Heart left ventricle (tissue), 16 donors: ENCODE measurements at regions of chr11 and their contacts with region 1.

Region 1: DNA sequence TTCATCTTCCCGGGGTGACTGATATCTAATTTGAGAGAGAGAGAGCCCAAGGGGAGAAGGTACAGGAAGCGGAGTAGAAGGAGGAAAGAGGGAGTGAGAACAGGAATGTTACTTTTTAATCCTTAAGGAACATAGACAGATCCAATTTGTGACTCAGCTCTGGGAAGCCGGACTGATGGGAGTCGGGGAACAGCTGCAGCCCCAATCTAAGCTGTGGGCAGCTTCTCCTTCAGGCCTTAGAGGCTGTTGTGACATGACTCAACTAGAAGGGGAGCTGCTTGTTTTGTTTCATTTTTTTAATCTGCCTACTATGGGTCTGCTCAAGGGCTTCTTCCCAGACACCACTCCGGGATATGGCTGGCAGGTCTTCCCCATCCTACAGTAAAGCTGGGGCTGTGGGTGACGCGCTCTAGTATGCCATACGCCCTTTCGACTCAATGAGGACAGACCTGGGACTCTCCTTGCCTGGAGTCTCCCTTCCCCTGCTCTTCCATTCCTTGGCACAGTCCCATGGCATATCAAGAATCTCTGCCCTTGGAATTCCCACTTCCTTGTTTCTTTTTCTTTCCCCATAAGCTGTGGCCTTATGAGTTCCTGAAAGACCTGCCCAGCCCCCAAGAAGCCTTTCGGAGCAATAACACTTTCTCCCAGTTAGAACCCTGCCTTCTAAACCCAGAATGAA is 103.3 kb upstream of the AKIP1 start:
- DNase-seq: peak in 4 of 5 donors; percentile 44 to 76 (median 54)
- ATAC-seq: peak in 3 of 4 donors; percentile 44 to 68 (median 51)
- H3K4me3 ChIP-seq: peak overlapping the region in 10 of 12 donors; percentile 17 to 81 (median 64)
- H3K27ac ChIP-seq: peak overlapping the region; percentile 62 to 93 (median 88)
- H3K4me1 ChIP-seq: peaks cover 2 to 84% (median 62%) of the 10 kb centered on the region in 12 donors
- H3K27me3 ChIP-seq: no peaks in the 10 kb centered on the region
- CTCF ChIP-seq: no peak
- POLR2A ChIP-seq: no peak

Region 2: DNA sequence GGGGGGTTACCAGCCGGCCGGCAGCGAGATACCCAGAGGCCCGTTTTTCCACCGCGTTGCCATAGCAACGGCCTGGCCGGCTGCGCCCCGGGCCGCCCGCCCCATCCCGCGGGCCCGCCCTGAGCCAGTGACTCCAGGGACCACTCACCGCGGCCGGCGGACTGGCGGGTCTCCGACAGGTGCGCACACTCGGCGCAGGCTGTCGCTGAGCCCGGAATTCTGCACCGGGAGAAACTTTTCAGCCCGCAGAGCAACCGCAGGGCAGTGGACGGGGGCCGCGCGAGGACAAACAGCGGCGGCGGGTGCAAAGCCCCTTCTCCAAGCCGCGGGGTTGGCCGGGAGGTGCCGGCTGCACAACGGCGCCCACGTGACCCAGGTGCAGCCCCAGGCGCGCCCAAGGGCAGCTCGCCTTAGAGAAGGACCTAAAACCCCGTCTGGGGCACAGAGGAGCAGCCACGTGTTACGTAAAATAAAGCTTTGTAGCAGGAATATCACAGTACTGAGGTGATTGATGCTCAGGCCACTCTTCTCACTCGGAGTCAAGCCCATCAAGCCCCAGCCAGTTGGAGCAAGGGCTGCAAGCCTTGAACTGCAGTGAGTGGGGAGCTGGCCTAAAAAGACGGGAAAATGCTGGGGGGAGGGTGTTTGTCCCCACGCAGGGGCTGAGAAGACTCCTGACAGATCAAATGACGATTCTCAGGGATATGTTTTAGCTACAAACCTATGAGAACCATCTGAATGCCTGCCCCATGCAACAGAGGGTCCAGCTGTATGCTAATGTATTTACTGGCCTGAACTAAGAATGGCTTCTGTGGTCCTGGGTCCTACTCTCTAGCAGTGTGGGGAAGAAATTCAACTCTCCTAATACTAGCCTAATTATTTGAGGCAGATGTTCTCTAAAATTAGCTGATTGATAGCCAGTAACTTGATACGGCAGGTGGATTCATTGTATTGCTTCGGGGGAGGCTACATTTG is 213.5 kb before region 1 on chr11 and contains the start of gene STK33:
- intact Hi-C with region 1: loop called in 1 of 10 experiments (anchors 10 kb)
- DNase-seq: peak; percentile 68 to 81 (median 74)
- ATAC-seq: peak; percentile 82 to 97 (median 96)
- H3K4me3 ChIP-seq: peak within 1 kb of the TSS; percentile 36 to 79 (median 65)
- H3K27ac ChIP-seq: peak within 1 kb of the TSS; percentile 9 to 75 (median 60)
- H3K4me1 ChIP-seq: peaks cover 0 to 15% (median 0%) of the 10 kb centered on the region in 12 donors
- H3K27me3 ChIP-seq: peaks cover 4 to 37% (median 8%) of the 10 kb centered on the region in 9 donors
- CTCF ChIP-seq: no peak
- POLR2A ChIP-seq: no peak
- total RNA-seq, gene STK33: 18.0 to 41.5 (median 31.0) TPM

Region 3: DNA sequence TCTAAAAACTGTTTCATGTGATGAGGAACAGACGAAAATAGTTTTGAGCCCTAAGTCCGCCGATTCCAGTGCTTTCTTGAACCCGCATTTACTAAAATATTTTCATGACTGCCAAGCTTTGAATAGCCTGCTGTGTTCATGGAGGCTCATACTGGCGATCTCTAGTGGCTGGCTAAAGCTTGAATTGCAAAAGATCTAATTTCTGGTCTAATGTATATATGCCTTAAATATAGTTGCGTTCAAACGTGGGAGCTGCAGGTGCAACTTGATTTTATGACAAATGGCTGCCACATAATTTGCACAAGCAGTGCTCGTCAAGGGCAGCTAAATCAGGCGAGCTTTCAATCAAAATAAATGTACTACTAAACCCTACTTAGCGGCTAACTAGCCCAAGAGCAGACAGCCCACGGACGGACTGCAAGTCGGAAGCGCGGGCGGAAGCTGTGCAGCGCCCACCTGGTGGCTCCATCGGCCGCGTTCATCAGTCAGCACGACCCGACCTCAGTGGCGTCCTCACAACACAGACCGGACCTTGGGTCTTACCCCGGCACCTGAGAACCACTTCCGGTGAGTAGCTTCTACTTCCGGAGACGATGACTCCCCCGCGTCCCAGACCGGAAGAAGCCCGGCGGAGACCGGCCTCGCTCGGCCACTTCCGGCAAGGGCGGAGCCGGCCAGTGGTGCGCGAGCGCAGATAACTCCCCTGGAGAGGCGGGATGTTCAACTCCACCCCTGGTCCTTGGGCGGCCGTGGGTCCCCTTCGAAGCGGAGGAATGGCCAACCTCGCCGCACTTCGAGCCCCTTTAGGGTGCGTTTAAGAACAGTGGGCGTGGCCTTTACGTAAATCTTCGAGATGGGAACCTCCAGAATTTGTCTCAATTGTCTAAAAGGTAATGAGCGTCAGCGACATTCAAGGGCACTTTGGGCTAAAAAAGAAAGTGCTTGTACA is 119.0 kb before region 1 on chr11:
- intact Hi-C with region 1: loop called (anchors 2 to 5 kb)
- DNase-seq: peak; percentile 94 to 97 (median 96)
- ATAC-seq: peak; percentile 97 to 99 (median 98)
- H3K4me3 ChIP-seq: peak overlapping the region; percentile 38 to 75 (median 66)
- H3K27ac ChIP-seq: peak overlapping the region; percentile 45 to 96 (median 88)
- H3K4me1 ChIP-seq: peaks cover 0 to 44% (median 22%) of the 10 kb centered on the region in 12 donors
- H3K27me3 ChIP-seq: no peaks in the 10 kb centered on the region
- CTCF ChIP-seq: peak in 5 of 12 donors; percentile 17 to 53 (median 49)
- POLR2A ChIP-seq: peak in 1 of 2 donors; percentile 71

Region 4: DNA sequence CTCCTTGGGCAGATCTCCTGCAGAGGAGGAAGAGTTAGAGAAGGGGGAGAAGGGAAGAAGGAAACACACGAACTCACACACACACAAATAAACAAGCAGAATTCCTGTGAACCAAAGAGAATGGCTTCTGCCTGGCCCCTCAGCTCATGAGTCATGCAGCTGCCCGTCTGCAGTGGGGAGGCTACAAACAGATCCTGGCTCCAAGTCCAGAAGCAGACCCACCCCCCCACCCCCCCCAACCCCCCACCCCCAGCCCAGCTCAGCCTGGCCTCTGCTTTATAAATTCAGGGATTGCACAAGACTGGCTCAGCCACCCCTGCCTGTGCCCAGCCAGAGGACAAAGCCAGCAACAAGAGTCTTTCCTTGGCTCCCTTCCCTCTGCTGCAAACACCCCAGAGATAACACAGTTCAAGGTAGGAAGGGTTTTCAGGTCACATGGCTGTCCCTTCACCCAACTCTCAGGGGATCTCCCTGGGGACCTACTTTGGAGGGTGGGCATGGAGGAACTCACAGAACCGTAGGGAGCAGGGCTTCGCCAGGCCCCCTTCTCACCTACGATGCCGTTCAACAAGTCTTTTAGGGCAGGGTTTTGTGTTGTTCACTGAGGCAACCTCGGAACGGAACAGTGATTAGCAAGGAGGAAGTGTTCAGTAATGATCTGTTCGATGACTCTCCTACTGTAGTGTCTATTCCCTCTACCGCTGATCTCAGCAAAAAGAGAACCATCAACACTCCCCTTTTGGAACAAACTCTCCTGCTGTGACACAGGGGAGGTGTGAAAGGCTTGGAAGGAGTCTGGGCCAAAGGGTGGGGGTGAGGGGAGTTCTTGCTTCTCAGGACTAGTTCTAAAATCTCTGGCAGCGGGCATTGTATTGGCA is 89.6 kb before region 1 on chr11:
- intact Hi-C with region 1: loop called in 3 of 10 experiments (anchors 5 to 10 kb)
- DNase-seq: peak in 4 of 5 donors; percentile 36 to 82 (median 59)
- ATAC-seq: peak; percentile 77 to 82 (median 80)
- H3K4me3 ChIP-seq: no peak overlapping the region
- H3K27ac ChIP-seq: peak overlapping the region; percentile 50 to 95 (median 80)
- H3K4me1 ChIP-seq: peaks cover 24 to 97% (median 82%) of the 10 kb centered on the region in 12 donors
- H3K27me3 ChIP-seq: no peaks in the 10 kb centered on the region
- CTCF ChIP-seq: no peak
- POLR2A ChIP-seq: no peak

Region 5: DNA sequence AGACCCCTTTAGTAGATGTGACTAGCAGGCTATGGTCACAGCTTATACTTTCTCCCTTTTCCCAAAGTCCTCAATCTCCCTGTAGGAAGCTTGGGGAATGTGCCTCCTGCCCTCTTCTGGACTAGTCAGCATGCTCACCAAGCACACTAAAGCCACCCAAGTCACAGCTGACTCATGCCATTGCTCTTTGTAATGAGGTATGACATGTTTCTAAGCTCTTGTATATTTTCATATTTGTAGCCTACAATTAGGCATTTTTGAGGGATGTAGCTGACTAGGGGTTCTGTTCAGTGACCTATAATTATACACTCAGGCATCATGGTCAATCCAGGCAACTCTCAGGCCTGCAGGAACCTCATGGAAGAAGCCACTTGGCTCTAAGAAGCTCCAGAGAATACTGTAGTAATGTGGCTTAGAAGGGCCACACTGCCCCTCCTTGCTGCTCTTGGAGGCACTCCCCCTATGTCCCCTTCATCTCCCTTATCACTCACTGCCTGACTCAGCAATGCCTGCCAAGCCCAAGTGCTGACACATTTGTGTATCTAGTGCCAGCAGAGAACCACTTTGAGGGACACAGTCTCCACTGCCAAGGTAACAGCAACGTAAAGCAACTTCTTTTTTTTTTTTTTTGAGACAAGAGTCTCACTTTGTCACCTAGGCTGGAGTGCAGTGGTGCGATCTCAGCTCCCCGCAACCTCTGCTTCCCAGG is 38.9 kb before region 1 on chr11:
- intact Hi-C with region 1: loop called in 2 of 10 experiments (anchors 5 kb)
- DNase-seq: peak in 4 of 5 donors; percentile 71 to 88 (median 80)
- ATAC-seq: peak; percentile 90 to 94 (median 93)
- H3K4me3 ChIP-seq: no peak overlapping the region
- H3K27ac ChIP-seq: peak overlapping the region; percentile 31 to 86 (median 72)
- H3K4me1 ChIP-seq: peaks cover 8 to 90% (median 44%) of the 10 kb centered on the region in 12 donors
- H3K27me3 ChIP-seq: no peaks in the 10 kb centered on the region
- CTCF ChIP-seq: peak in 6 of 12 donors; percentile 8 to 43 (median 25)
- POLR2A ChIP-seq: no peak

Region 6: DNA sequence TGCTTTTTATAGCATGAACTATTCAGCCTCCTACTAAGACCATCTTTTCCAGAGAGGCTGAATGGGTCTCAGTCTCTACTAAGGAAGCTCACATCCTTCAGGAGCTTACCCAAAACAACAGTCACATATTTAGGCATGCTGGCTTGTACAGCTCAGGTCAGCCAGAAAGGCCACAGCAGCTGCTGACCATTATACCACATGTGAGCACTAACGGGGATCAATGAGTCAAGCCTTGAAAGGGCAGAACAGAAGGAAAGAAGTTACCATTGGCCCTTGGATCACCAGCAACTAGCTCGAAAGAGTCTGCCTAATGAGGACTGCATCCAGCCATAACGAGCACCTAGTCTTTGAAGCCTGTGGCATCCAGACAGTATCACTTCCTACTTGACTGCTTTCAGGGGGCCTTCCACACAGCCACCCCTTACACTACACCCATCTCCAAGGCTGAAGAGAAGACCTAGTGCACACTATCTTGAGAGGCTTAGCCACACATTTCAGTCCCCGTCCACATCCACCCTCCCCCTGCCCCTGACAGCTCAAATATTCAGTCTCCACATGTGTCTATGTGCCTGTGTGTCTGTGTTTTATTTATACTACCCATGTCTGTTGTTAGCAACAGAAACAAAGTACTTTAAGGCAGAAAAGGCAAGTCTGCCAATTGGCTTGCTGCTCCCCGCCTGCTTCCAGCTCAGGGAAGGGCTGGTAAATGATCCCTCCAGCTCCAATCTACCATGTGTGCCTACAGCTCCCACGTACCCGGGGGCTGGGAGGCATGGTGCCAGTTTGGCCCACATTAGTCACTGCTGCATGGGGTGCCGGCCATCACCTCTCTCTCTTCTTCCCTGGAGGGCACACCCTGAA is 29.5 kb before region 1 on chr11:
- intact Hi-C with region 1: loop called in 2 of 10 experiments (anchors 5 kb)
- DNase-seq: peak; percentile 47 to 79 (median 74)
- ATAC-seq: peak; percentile 86 to 91 (median 88)
- H3K4me3 ChIP-seq: no peak overlapping the region
- H3K27ac ChIP-seq: peak overlapping the region; percentile 41 to 86 (median 68)
- H3K4me1 ChIP-seq: peaks cover 0 to 90% (median 60%) of the 10 kb centered on the region in 12 donors
- H3K27me3 ChIP-seq: no peaks in the 10 kb centered on the region
- CTCF ChIP-seq: no peak
- POLR2A ChIP-seq: no peak

Region 7: DNA sequence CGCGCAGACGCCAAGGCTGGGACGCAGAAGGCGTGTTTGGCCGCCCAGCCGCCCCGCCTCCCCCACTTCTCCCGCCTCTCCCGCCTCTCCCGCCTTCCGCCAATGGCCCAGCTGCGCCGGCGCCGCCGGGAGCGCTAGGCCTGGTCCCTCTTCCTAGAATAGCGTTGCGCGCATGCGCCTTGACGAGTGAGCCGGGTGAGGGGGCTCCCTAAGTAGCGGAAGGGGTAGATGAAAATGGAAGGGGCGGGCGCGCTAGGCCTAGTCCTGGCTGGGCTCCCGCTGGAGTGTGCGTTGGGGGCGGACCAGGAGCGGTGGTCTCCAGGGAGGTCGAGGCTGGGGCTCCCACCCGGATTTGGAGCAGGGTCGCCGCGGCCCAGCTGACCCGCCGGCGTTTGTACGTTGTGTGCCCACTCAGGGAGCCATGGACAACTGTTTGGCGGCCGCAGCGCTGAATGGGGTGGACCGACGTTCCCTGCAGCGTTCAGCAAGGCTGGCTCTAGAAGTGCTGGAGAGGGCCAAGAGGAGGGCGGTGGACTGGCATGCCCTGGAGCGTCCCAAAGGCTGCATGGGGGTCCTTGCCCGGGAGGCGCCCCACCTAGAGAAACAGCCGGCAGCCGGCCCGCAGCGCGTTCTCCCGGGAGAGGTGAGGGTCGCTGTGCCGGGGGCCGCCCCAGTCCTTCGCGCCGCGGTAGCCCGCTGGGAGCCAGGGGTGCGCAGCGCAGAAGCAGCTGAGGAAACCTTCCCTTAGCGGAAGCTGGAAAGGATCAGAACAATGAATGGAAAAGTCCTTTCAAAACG is 103.5 kb after region 1 on chr11 and contains the start of gene AKIP1:
- intact Hi-C with region 1: loop called in 3 of 10 experiments (anchors 5 to 10 kb)
- DNase-seq: peak; percentile 97 to 98 (median 98)
- ATAC-seq: peak; percentile 94 to 97 (median 96)
- H3K4me3 ChIP-seq: peak within 1 kb of the TSS; percentile 40 to 96 (median 85)
- H3K27ac ChIP-seq: peak within 1 kb of the TSS; percentile 80 to 98 (median 94)
- H3K4me1 ChIP-seq: peaks cover 0 to 52% (median 25%) of the 10 kb centered on the region in 12 donors
- H3K27me3 ChIP-seq: no peaks in the 10 kb centered on the region
- CTCF ChIP-seq: no peak
- POLR2A ChIP-seq: peak in 1 of 2 donors; percentile 74
- total RNA-seq, gene AKIP1: 21.6 to 39.9 (median 27.4) TPM